SK-N-SH (cell line): ENCODE measurements at regions of chr10 and their contacts with region 1.

Region 1: DNA sequence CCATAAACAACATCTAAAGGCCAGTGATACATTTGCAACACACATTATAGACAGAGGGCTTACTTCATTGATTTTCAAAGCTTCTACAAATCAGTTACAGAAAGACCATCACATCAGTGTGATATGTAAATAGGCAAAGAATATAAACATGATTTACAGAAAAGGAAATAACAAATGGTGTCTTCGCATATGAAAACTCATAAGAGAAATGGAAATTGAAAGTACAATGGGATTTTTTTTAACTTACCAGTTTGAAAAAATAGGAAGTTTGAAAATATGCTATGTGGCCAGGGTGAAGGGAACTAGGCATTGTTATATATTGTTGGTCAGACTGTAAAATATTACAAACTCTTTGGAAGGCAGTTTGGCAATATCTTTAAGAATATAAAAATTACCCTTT is 27.3 kb downstream of the SEC23IP start:
- DNase-seq: no peak
- H3K4me3 ChIP-seq: no peak overlapping the region
- H3K27ac ChIP-seq: no peak overlapping the region
- H3K4me1 ChIP-seq: no peaks in the 10 kb centered on the region
- H3K27me3 ChIP-seq: no peaks in the 10 kb centered on the region
- CTCF ChIP-seq: no peak
- EP300 ChIP-seq: no peak
- RAD21 ChIP-seq: no peak

Region 2: DNA sequence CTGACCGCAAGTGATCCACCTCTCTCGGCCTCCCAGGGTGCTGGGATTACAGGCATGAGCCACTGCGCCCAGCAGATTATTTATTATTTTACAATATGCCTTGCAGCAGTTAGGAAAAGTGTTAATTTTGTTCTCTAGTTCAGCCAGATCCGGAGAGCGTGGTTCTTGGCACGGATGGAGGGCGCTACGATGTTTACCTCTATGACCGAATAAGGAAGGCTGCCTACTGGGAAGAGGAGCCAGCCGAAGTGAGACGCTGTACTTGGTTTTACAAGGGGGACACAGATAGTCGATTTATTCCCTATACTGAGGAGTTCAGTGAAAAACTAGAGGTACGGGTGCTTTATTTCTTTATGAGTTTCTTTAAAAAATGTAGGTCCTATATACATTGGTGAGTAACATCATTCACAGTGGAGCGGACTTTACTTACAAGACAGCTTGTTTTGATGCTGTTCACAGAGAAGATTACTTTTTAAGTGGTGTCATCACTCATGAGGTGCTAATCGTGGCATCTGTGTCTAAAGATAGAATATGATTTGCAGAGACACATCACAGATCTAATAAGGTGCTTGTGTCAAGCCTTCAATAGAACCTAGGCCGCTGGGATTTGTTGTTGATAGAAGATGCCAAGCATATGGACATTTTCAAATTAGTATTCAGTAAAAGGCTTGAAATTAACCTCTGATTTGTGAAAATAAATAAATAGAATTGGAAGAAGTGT is 15.7 kb before region 1 on chr10:
- CTCF ChIA-PET with region 1: no interaction called
- POLR2A ChIA-PET with region 1: no interaction called
- DNase-seq: no peak
- H3K4me3 ChIP-seq: no peak overlapping the region
- H3K27ac ChIP-seq: no peak overlapping the region
- H3K4me1 ChIP-seq: no peaks in the 10 kb centered on the region; a peak in 1 of 4 replicates
- H3K27me3 ChIP-seq: no peaks in the 10 kb centered on the region
- CTCF ChIP-seq: no peak
- EP300 ChIP-seq: no peak
- RAD21 ChIP-seq: no peak

Region 3: GRCh38 chr10:119933179-119933578 is 13.4 kb after region 1 on chr10:
- CTCF ChIA-PET with region 1: interaction called, 10 read pairs
- POLR2A ChIA-PET with region 1: no interaction called
- DNase-seq: peak; percentile 60
- H3K4me3 ChIP-seq: peak overlapping the region in 1 of 2 experiments; percentile 17; a peak in 1 of 4 replicates
- H3K27ac ChIP-seq: no peak overlapping the region
- H3K4me1 ChIP-seq: no peaks in the 10 kb centered on the region
- H3K27me3 ChIP-seq: no peaks in the 10 kb centered on the region
- CTCF ChIP-seq: peak; percentile 69
- EP300 ChIP-seq: no peak
- RAD21 ChIP-seq: peak; percentile 86